ENCODE measurements at regions of chr19 and their contacts with region 1.

Region 1: DNA sequence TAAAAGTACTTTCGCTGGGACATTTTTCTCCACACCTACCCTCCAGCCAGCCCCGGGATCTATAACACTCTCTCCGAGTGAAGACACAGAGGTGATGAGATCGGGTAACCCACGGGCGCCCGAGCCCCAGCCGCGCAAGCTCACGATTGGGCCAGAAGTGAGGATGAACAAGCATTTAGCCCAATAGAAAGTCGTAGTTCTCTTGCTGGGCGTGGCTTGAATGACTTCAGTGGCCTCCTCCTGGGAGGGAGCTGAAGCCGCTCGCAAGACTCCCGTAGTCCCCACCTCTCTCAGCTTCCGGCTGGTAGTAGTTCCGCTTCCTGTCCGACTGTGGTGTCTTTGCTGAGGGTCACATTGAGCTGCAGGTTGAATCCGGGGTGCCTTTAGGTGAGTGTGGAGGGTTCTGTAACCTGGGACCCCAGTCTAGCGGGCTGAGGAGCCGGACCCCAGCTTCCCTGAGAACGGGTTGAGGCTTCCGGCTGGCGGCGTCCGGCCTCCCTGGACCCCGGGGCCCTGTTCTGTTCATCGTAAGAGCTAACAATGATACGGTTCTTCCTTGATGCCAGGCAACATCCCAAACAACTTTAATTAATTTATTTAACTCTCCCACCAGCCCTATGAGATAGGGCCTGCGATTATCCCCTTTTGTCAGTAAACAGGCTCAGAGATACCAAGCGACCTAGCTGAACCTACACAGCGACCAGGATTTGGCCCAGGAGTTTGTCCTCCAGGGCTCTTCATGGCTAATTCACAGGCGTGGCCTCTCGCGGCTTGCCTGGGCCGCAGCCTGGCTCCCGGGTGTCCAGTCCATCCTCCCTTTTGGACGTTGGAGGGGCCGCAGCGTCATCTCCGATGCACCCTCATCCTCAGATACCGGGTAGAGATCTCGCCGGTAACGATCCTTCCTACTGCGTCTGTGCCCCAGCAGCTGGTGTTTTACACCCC is at the start of gene COX6B1:
- DNase-seq: peak; percentile 85 to 97
- ATAC-seq: peak; percentile 74 to 85 (median 75)
- H3K4me3 ChIP-seq: peak within 1 kb of the TSS; percentile 87
- H3K4me3 Mint-ChIP-seq: peak within 1 kb of the TSS; percentile 95
- H3K27ac ChIP-seq: peak within 1 kb of the TSS; percentile 82
- H3K27ac Mint-ChIP-seq: peak within 1 kb of the TSS; percentile 96 to 97
- H3K4me1 ChIP-seq: peaks cover 34% of the 10 kb centered on the region
- H3K4me1 Mint-ChIP-seq: peaks cover 24 to 42% of the 10 kb centered on the region in 2 donors
- H3K27me3 ChIP-seq: no peaks in the 10 kb centered on the region
- H3K27me3 Mint-ChIP-seq: no peaks in the 10 kb centered on the region
- CTCF ChIP-seq: no peak
- total RNA-seq, gene COX6B1: 213 to 247 (median 215) TPM

Region 2: DNA sequence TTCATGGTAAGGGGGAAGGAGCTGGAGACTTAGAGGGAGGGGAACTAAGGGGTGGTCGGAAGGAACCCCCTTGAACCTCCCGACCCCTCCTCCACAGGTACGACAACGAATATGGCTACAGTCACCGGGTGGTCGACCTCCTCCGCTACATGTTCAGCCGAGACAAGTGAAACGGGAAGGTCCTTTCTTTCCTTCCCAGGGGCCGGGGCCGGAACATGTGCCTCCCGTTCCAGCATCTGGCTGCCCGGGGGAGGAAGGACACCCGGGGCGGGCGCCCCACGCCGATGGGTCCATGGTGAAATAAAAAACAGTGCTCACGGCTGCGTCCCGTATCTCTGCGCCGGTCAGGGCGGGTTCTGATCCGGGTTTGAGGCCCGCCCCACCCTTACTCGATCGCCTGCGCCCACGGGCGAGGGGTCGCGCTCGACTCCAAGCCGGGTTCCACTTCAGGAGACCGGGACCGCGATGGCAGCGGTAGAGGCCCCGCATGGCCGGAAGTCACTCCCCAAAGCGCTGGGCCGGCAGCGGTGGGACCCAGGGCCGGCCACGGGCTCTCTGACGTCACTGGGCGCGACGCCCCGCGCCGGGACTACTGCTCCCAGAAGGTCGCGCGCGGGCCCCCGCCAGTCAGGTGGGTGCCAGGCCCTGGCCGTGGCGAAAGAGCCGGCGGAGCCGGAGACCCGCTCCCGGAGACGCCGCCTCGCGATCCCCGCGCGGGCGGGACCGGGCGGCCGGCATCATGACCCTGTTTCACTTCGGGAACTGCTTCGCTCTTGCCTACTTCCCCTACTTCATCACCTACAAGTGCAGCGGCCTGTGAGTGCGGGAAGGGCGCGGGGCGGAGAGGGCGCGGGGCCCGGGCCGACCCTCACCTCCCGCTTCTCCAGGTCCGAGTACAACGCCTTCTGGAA is 103.0 kb before region 1 on chr19 and contains the start of gene TMEM147:
- intact Hi-C with region 1: loop called (anchors 5 kb)
- DNase-seq: peak; percentile 79 to 83
- ATAC-seq: peak; percentile 73 to 87 (median 81)
- H3K4me3 ChIP-seq: peak within 1 kb of the TSS; percentile 95
- H3K4me3 Mint-ChIP-seq: peak within 1 kb of the TSS; percentile 95
- H3K27ac ChIP-seq: peak within 1 kb of the TSS; percentile 77
- H3K27ac Mint-ChIP-seq: peak within 1 kb of the TSS; percentile 80 to 91
- H3K4me1 ChIP-seq: peaks cover 28% of the 10 kb centered on the region
- H3K4me1 Mint-ChIP-seq: peaks cover 34 to 49% of the 10 kb centered on the region in 2 donors
- H3K27me3 ChIP-seq: no peaks in the 10 kb centered on the region
- H3K27me3 Mint-ChIP-seq: no peaks in the 10 kb centered on the region
- CTCF ChIP-seq: no peak
- total RNA-seq, gene TMEM147: 30.6 to 37.9 (median 31.2) TPM

Region 3: DNA sequence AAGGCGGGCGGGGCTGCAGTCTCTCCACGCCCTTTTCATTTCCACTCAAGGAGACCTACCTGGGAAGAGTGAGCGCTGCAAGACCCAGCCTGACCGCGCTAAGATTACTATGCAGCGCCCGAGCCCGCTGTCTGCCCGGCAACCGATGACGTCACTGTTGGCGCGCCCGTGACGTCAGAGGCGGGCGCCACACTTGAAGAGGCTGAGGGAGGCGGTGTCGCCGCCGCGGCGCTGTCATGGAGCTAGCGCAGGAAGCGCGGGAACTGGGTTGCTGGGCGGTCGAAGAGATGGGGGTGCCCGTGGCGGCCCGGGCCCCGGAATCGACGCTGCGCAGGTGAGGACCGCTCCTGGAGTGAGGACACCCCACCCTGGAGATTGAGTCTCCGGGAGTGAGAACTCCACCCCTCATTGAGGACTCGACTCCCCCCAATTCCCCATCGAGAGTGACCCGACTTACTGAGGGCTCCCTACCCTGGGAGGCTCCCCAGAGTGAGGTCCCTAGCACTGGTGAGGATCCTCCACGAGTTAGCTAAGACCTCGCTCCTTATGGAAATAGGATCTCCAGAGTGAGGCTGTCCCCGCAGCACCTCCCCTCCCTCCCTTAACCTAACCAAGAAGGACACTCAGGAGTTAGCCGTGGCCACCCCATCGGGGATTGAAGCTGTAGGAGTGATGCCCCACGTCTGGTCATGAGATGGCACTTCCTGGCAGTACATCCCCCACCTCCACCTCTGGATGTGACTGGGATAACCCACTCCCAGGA is 35.5 kb before region 1 on chr19 and contains the start of gene HAUS5:
- intact Hi-C with region 1: loop called (anchors 1 kb)
- DNase-seq: peak; percentile 97 to 98
- ATAC-seq: peak; percentile 94 to 97 (median 96)
- H3K4me3 ChIP-seq: peak within 1 kb of the TSS; percentile 68
- H3K4me3 Mint-ChIP-seq: peak within 1 kb of the TSS; percentile 93
- H3K27ac ChIP-seq: peak within 1 kb of the TSS; percentile 69
- H3K27ac Mint-ChIP-seq: peak within 1 kb of the TSS; percentile 84 to 93
- H3K4me1 ChIP-seq: peaks cover 32% of the 10 kb centered on the region
- H3K4me1 Mint-ChIP-seq: peaks cover 10 to 14% of the 10 kb centered on the region in 2 donors
- H3K27me3 ChIP-seq: no peaks in the 10 kb centered on the region
- H3K27me3 Mint-ChIP-seq: no peaks in the 10 kb centered on the region
- CTCF ChIP-seq: no peak
- total RNA-seq, gene HAUS5: 17.5 to 26.4 (median 21.6) TPM

Region 4: DNA sequence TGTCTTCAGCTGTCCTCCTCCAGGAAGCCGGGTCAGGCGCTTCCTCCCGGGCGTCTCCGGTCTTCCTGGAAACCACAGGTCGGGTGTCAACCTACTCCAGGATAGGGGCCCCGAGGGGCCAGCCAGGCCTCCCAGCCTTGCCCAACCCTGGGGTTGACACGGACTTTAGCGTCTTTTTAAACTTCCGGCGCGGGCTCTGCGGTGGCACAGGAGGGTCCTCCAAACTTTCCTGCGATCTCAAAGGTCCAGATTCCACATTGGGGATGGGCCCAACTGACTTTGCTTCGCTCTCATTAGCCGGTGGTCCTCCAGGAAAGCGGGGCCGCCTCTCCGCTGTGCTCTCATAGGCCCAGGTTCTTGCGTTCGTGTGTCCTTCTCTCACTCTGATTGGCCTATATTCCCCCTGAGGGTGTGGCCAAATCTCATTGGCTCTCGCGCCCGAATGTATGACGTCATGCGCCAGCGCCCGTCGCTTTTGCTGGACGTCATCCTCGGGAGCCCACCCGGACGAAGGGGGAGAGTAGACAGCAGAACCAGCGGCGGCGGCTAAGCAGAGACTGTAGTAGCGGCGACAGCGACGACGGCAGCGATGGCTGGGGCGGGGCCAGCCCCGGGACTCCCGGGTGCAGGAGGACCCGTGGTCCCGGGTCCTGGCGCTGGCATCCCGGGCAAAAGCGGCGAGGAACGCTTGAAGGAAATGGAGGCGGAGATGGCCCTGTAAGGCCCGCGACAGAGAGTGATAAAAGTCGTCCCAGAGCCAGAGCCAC is 19.5 kb before region 1 on chr19 and contains the start of gene RBM42:
- intact Hi-C with region 1: loop called (anchors 1 kb)
- DNase-seq: peak; percentile 99
- ATAC-seq: peak; percentile 97 to 100 (median 98)
- H3K4me3 ChIP-seq: peak within 1 kb of the TSS; percentile 86
- H3K4me3 Mint-ChIP-seq: peak within 1 kb of the TSS; percentile 99
- H3K27ac ChIP-seq: peak within 1 kb of the TSS; percentile 89
- H3K27ac Mint-ChIP-seq: peak within 1 kb of the TSS; percentile 96 to 97
- H3K4me1 ChIP-seq: peaks cover 23% of the 10 kb centered on the region
- H3K4me1 Mint-ChIP-seq: peaks cover 26 to 42% of the 10 kb centered on the region in 2 donors
- H3K27me3 ChIP-seq: no peaks in the 10 kb centered on the region
- H3K27me3 Mint-ChIP-seq: no peaks in the 10 kb centered on the region
- CTCF ChIP-seq: no peak
- total RNA-seq, gene RBM42: 51.6 to 61.7 (median 58.2) TPM

Region 5: DNA sequence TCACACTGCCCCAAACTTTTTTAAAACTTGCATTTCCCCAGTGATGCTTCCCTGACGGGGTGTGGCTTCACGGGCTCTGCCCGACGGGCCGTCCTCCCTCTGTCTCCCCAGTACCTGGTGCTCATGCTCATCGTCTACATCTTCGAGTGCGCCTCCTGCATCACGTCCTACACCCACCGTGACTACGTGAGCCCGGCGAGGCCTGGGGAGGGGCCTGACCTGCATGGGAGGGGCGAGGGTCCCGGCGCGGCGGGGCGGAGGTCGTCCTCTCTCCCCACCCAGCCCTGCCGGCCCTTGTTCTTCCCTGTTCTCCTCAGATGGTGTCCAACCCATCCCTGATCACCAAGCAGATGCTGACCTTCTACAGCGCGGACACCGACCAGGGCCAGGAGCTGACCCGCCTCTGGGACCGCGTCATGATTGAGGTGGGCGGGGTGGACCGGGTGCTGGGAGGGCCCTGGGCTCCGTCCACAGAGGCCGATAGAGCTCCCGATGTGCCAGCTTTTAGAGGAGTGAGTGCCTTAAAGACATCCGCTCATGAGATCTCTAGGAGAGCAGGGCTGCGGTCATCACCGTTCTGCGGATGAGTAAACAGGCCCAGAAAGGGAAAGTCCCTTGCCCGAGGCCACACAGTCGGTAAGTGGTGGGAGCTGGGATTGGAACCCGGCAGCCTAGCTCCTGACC is 25.0 kb after region 1 on chr19:
- intact Hi-C with region 1: no loop called
- DNase-seq: peak in 1 of 2 donors; percentile 66
- ATAC-seq: peak; percentile 66 to 84 (median 83)
- H3K4me3 ChIP-seq: peak overlapping the region; percentile 43
- H3K4me3 Mint-ChIP-seq: peak overlapping the region; percentile 79
- H3K27ac ChIP-seq: no peak overlapping the region
- H3K27ac Mint-ChIP-seq: peak overlapping the region in 1 of 2 donors; percentile 49
- H3K4me1 ChIP-seq: peaks cover 12% of the 10 kb centered on the region
- H3K4me1 Mint-ChIP-seq: peaks cover 0 to 8% of the 10 kb centered on the region in 2 donors
- H3K27me3 ChIP-seq: peaks cover 11% of the 10 kb centered on the region
- H3K27me3 Mint-ChIP-seq: peaks cover 34 to 39% of the 10 kb centered on the region in 2 donors
- CTCF ChIP-seq: no peak

Region 6: GRCh38 chr19:35716801-35717666 is 68.7 kb after region 1 on chr19:
- intact Hi-C with region 1: no loop called
- DNase-seq: peak; percentile 89 to 98
- ATAC-seq: peak; percentile 83 to 93 (median 86)
- H3K4me3 ChIP-seq: peak overlapping the region; percentile 86
- H3K4me3 Mint-ChIP-seq: peak overlapping the region; percentile 99
- H3K27ac ChIP-seq: peak overlapping the region; percentile 79
- H3K27ac Mint-ChIP-seq: peak overlapping the region; percentile 94 to 98
- H3K4me1 ChIP-seq: peaks cover 48% of the 10 kb centered on the region
- H3K4me1 Mint-ChIP-seq: peaks cover 16 to 57% of the 10 kb centered on the region in 2 donors
- H3K27me3 ChIP-seq: no peaks in the 10 kb centered on the region
- H3K27me3 Mint-ChIP-seq: no peaks in the 10 kb centered on the region
- CTCF ChIP-seq: peak; percentile 95

Region 7: GRCh38 chr19:35748106-35749020 is 100.1 kb after region 1 on chr19 and contains the start of gene LIN37:
- intact Hi-C with region 1: loop called (anchors 2 kb)
- DNase-seq: peak; percentile 97 to 99
- ATAC-seq: peak; percentile 73 to 90 (median 77)
- H3K4me3 ChIP-seq: peak within 1 kb of the TSS; percentile 91
- H3K4me3 Mint-ChIP-seq: peak within 1 kb of the TSS; percentile 97
- H3K27ac ChIP-seq: peak within 1 kb of the TSS; percentile 84
- H3K27ac Mint-ChIP-seq: peak within 1 kb of the TSS; percentile 92
- H3K4me1 ChIP-seq: peaks cover 46% of the 10 kb centered on the region
- H3K4me1 Mint-ChIP-seq: peaks cover 33 to 47% of the 10 kb centered on the region in 2 donors
- H3K27me3 ChIP-seq: no peaks in the 10 kb centered on the region
- H3K27me3 Mint-ChIP-seq: no peaks in the 10 kb centered on the region
- CTCF ChIP-seq: no peak
- total RNA-seq, gene LIN37: 16.7 to 22.1 (median 18.2) TPM

Region 8: GRCh38 chr19:35757749-35758608 is 109.7 kb after region 1 on chr19 and contains the start of gene PROSER3:
- intact Hi-C with region 1: loop called (anchors 5 kb)
- DNase-seq: peak; percentile 97 to 99
- ATAC-seq: peak; percentile 92 to 99 (median 95)
- H3K4me3 ChIP-seq: peak within 1 kb of the TSS; percentile 84
- H3K4me3 Mint-ChIP-seq: peak within 1 kb of the TSS; percentile 98
- H3K27ac ChIP-seq: peak within 1 kb of the TSS; percentile 87
- H3K27ac Mint-ChIP-seq: peak within 1 kb of the TSS; percentile 93 to 97
- H3K4me1 ChIP-seq: peaks cover 29% of the 10 kb centered on the region
- H3K4me1 Mint-ChIP-seq: peaks cover 29 to 40% of the 10 kb centered on the region in 2 donors
- H3K27me3 ChIP-seq: no peaks in the 10 kb centered on the region
- H3K27me3 Mint-ChIP-seq: peaks cover 0 to 18% of the 10 kb centered on the region in 2 donors
- CTCF ChIP-seq: no peak
- total RNA-seq, gene PROSER3: 33.1 to 40.2 (median 35.9) TPM

Region 9: GRCh38 chr19:35773020-35773806 is 124.9 kb after region 1 on chr19:
- intact Hi-C with region 1: no loop called
- DNase-seq: no peak
- ATAC-seq: no peak
- H3K4me3 ChIP-seq: no peak overlapping the region
- H3K4me3 Mint-ChIP-seq: no peak overlapping the region
- H3K27ac ChIP-seq: no peak overlapping the region
- H3K27ac Mint-ChIP-seq: no peak overlapping the region
- H3K4me1 ChIP-seq: peaks cover 16% of the 10 kb centered on the region
- H3K4me1 Mint-ChIP-seq: peaks cover 18 to 27% of the 10 kb centered on the region in 2 donors
- H3K27me3 ChIP-seq: no peaks in the 10 kb centered on the region
- H3K27me3 Mint-ChIP-seq: no peaks in the 10 kb centered on the region
- CTCF ChIP-seq: no peak